HEK293 (cell line): ENCODE measurements at regions of chr17 and their contacts with region 1.

Region 1: DNA sequence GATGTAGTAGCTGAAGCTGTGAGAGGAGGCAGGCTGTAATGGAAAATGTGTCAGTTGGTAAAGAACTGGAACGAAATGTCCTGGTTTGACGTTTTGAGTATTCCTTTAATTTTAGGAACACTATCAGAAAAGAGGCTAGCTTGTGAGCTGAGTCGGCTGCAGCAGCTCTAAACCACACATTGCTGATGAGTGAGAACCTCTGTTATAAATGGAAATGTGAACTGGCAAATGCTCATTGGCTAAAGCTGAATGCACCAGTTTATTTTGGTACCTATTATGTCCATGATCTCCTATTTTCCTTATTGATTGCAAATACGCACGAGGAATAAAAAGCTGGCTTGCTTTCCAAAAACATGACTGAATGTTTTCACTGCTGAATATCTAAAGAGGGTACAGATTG is 11.0 kb upstream of the WIPI1 start:
- H3K4me3 ChIP-seq: no peak overlapping the region
- H3K27ac ChIP-seq: no peak overlapping the region
- H3K4me1 ChIP-seq: no peaks in the 10 kb centered on the region
- CTCF ChIP-seq: no peak

Region 2: GRCh38 chr17:68391561-68392268 is 76.6 kb before region 1 on chr17:
- CTCF ChIA-PET with region 1: no interaction called
- POLR2A ChIA-PET with region 1: no interaction called
- H3K4me3 ChIP-seq: no peak overlapping the region
- H3K27ac ChIP-seq: no peak overlapping the region
- H3K4me1 ChIP-seq: peaks cover 1% of the 10 kb centered on the region
- CTCF ChIP-seq: no peak

Region 3: DNA sequence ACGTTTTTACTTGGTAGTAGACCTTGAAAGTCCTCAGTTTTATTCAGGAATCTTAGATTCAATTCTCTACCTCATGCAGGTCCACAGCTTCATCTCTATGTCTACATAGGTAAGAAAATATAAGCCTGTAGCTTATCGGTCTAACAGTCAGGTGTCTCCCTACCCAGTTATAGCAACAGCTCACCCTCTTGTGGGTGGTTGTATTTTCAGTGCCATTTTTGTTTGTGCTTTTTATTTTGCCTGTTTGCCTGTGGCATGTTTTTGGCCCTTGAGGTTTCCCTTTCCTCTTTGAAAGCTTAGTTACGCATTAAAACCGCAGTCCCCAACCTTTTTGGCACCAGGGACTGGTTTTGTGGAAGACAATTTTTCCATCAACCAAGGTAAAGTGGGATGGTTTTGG is 12.6 kb after region 1 on chr17:
- CTCF ChIA-PET with region 1: interaction called, 11 read pairs
- POLR2A ChIA-PET with region 1: no interaction called
- H3K4me3 ChIP-seq: no peak overlapping the region
- H3K27ac ChIP-seq: no peak overlapping the region
- H3K4me1 ChIP-seq: no peaks in the 10 kb centered on the region
- CTCF ChIP-seq: no peak

Region 4: GRCh38 chr17:68759343-68760132 is 291.2 kb after region 1 on chr17:
- CTCF ChIA-PET with region 1: interaction called, 13 read pairs
- POLR2A ChIA-PET with region 1: no interaction called
- H3K4me3 ChIP-seq: peak overlapping the region; percentile 45
- H3K27ac ChIP-seq: peak overlapping the region; percentile 52; the same call in 1 of the 2 replicates
- H3K4me1 ChIP-seq: peaks cover 6% of the 10 kb centered on the region
- CTCF ChIP-seq: peak; percentile 69; the same call in 1 of the 2 replicates